B cell (primary cell): ENCODE measurements at regions of chr19 and their contacts with region 1.

Region 1: DNA sequence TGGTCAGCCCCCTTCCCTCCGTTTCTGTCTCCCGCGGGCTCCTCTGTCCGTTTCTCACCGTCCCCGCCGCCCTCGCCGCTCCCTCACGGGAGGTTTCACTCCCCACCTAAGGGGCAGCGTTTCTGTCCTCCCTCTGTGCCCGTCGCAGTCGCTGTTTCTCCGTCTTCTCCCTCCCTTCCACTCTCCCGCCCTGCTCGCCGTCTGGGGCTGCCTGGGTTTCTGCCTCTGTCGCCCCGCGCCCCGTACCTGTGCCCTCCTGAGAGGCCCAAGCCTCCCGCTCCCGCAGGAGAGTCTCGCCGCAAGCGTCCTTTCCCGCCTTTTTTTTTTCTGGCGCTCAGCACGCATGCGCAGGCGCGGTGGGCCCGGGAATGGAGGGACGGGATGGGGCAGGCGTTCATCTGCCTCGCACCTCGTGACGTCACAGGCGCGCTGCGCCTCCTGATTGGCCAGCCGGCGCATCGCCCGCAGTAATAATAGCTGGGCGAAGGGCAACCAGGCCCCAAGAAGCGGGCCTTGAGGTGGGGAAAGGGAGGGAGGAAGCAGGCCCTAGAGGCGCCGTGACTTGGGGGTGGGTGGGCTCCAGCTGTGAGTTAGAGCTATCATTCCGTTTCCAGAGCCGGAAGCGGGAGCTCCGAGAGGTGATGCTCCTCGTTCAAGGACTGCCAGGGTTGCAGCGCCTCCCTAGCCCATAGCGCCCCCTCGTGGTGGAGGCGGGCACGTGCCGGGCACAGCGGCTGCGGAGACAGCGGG is 15.4 kb downstream of the SSC5D start:
- DNase-seq: peak; percentile 98
- ATAC-seq: peak; percentile 96
- H3K4me3 ChIP-seq: peak overlapping the region in 4 of 5 experiments; percentile 67 to 71 (median 69)
- H3K4me3 Mint-ChIP-seq: peak overlapping the region; percentile 93
- H3K27ac ChIP-seq: peak overlapping the region; percentile 91 to 94
- H3K27ac Mint-ChIP-seq: peak overlapping the region; percentile 94
- H3K4me1 ChIP-seq: peaks cover 4 to 16% of the 10 kb centered on the region in 2 donors
- H3K4me1 Mint-ChIP-seq: peaks cover 16% of the 10 kb centered on the region
- H3K27me3 ChIP-seq: no peaks in the 10 kb centered on the region
- H3K27me3 Mint-ChIP-seq: no peaks in the 10 kb centered on the region
- CTCF ChIP-seq: peak; percentile 99

Region 2: DNA sequence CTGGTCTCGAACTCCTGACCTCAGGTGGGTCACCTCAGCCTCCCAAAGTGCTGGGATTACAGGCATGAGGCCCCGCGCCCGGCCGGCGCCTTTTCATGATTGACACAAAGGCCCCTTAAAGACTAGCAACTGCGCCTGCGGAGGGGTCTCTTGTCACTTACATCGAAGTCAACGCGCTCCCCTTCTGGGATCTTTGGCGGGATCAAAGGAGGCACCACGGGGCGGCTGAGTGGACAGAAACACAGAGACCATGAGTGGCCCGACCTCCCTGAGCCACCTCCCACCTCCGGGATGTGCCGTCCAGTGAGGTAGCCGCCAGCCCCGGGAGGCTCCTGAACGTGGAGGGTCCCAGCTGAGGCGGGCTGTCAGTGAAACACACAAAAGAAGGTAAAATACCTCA is 362.0 kb before region 1 on chr19:
- CTCF ChIA-PET with region 1: interaction called, 133 read pairs
- POLR2A ChIA-PET with region 1: interaction called, 5 read pairs
- intact Hi-C with region 1: no loop called
- DNase-seq: no peak
- ATAC-seq: no peak
- H3K4me3 ChIP-seq: peak overlapping the region in 1 of 5 experiments; percentile 24
- H3K4me3 Mint-ChIP-seq: no peak overlapping the region
- H3K27ac ChIP-seq: no peak overlapping the region
- H3K27ac Mint-ChIP-seq: no peak overlapping the region
- H3K4me1 ChIP-seq: peaks cover 19 to 20% of the 10 kb centered on the region in 2 donors
- H3K4me1 Mint-ChIP-seq: peaks cover 7% of the 10 kb centered on the region
- H3K27me3 ChIP-seq: peaks cover 0 to 80% (median 26%) of the 10 kb centered on the region in 4 experiments
- H3K27me3 Mint-ChIP-seq: peaks cover 36% of the 10 kb centered on the region
- CTCF ChIP-seq: no peak

Region 3: DNA sequence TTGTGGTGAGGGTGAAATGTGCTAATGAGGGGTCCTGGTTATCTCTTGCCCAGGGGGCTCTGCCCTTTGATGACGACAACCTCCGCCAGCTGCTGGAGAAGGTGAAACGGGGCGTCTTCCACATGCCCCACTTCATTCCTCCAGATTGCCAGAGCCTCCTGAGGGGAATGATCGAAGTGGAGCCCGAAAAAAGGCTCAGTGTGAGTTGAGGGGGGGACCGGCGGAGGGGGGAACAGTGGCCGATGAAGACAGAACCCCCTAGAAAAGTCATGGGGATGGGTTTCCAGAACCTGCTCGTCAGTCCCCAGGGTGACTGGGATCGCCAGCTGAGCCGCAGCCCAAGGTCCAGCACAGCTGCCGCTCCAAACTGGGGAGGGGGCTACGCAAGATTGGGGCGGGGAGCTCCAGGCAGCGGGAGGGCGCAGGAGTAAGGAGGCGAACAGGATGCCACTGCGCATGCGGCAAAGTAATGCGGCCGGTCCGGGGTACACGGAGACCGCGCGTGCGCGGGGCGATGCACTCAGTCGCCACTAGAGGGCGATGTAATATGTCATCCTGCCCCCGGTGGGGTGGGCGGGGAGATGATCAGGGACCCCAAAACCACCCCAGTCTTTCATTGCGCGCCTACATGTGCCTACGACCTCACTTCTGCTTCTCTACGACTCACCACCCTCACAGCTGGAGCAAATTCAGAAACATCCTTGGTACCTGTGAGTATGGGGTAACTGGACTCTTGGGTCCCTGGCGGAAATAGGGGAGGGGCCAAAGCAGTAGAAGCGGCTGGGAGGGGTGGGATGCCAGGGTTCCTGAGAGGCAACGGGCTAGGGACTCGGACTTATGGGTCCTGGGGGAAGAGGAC is 202.0 kb before region 1 on chr19:
- CTCF ChIA-PET with region 1: interaction called, 17 read pairs
- POLR2A ChIA-PET with region 1: no interaction called
- intact Hi-C with region 1: loop called (anchors 5 kb)
- DNase-seq: peak; percentile 95
- ATAC-seq: peak; percentile 91
- H3K4me3 ChIP-seq: peak overlapping the region in 4 of 5 experiments; percentile 35 to 53 (median 49)
- H3K4me3 Mint-ChIP-seq: peak overlapping the region; percentile 90
- H3K27ac ChIP-seq: peak overlapping the region; percentile 25 to 64
- H3K27ac Mint-ChIP-seq: peak overlapping the region; percentile 87
- H3K4me1 ChIP-seq: peaks cover 8 to 15% of the 10 kb centered on the region in 2 donors
- H3K4me1 Mint-ChIP-seq: peaks cover 12% of the 10 kb centered on the region
- H3K27me3 ChIP-seq: no peaks in the 10 kb centered on the region
- H3K27me3 Mint-ChIP-seq: peaks cover 6% of the 10 kb centered on the region
- CTCF ChIP-seq: peak; percentile 92

Region 4: DNA sequence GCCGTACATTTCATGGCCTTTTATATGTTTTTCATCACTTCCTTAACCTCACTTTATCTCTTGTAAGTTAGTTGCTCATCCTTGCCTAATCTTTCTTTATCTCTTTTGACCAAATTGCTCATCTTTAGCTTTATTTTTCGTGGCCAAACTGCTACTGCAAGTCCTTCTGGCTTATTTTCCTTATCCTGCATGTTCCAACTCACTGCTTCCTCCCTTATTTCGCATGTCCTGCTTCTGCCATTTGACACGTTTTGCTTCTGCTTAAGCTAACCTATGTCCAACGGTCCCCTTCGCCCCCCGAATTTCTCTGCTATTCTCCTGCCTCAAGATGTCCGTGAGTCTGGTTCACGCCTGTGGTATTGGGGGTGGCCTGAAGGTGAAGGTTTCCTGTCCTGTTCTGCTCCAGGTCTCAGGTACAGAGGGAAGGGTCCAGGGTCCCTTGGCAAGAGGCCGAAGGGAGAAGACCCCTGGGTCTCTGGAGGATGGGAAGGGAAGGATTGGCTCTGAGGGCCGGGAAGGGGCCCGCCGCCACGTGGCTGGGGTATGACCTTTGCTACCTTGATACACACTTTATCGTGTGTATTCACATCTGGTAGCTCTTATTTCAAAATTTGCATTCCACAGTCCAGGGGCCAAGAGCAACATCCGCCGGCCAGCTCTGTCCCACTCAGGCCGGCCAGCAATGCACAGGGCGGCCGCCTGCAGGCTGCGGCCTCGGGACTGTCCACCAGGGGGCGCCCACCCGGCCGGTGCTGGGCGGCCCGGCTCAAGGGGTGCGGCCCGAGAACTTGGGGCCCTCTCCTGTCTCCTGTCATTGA is 36.2 kb before region 1 on chr19:
- CTCF ChIA-PET with region 1: interaction called, 70 read pairs
- POLR2A ChIA-PET with region 1: no interaction called
- intact Hi-C with region 1: loop called (anchors 1 kb)
- DNase-seq: peak; percentile 79
- ATAC-seq: peak; percentile 99
- H3K4me3 ChIP-seq: no peak overlapping the region
- H3K4me3 Mint-ChIP-seq: no peak overlapping the region
- H3K27ac ChIP-seq: no peak overlapping the region
- H3K27ac Mint-ChIP-seq: no peak overlapping the region
- H3K4me1 ChIP-seq: peaks cover 4 to 7% of the 10 kb centered on the region in 2 donors
- H3K4me1 Mint-ChIP-seq: peaks cover 6% of the 10 kb centered on the region
- H3K27me3 ChIP-seq: no peaks in the 10 kb centered on the region
- H3K27me3 Mint-ChIP-seq: no peaks in the 10 kb centered on the region
- CTCF ChIP-seq: peak; percentile 99

Region 5: DNA sequence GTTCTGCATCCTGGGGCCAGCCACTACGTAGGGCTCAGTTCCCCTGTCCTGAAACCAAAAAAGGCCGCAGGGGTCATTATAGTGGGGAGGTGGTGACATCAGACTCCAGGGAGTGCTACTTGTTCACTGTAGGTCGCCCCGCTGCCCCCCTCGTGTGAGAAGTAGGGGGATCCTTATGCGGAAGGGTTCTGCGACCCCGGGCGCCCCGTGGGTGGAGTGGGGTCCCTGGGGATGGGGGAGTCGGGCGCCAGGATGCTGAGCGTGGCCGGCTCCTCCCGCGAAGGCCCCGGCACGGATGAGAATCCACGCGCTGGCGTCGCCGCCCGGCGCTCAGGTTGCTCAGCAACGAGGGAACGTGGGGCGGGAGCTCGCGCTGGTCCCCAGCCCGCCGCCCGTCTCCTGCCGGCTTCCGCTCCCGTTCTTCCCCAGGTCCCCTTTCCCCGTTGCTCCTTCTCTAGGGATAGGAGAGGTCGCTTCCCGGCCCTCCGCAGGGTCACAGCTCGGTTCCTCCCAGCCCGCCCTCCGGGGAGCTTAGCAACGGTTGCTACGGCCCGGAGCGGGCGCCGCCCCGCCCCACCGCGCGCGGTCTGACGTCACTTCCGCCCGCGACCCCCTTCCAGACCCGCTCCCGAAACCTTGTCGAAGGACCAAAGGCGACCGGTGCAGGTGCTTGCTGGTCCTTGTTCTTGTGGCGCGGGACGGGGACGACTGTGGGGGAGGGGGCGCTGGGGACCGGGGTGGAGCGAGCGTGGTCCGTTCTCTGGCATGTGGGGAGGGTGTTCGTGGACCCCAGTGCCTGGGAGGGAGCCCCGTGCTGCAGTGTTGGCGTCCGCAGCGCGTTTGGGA is 18.9 kb before region 1 on chr19 and contains the start of gene NAT14:
- CTCF ChIA-PET with region 1: interaction called, 15 read pairs
- POLR2A ChIA-PET with region 1: no interaction called
- intact Hi-C with region 1: no loop called
- DNase-seq: peak; percentile 89
- ATAC-seq: peak; percentile 76
- H3K4me3 ChIP-seq: peak within 1 kb of the TSS; percentile 3 to 71 (median 55)
- H3K4me3 Mint-ChIP-seq: peak within 1 kb of the TSS; percentile 83
- H3K27ac ChIP-seq: peak within 1 kb of the TSS; percentile 20 to 70
- H3K27ac Mint-ChIP-seq: peak within 1 kb of the TSS; percentile 80
- H3K4me1 ChIP-seq: peaks cover 10 to 22% of the 10 kb centered on the region in 2 donors
- H3K4me1 Mint-ChIP-seq: peaks cover 15% of the 10 kb centered on the region
- H3K27me3 ChIP-seq: no peaks in the 10 kb centered on the region
- H3K27me3 Mint-ChIP-seq: no peaks in the 10 kb centered on the region
- CTCF ChIP-seq: no peak
- total RNA-seq, gene NAT14: 10.7 and 12.6 TPM in 2 replicates

Region 6: GRCh38 chr19:55605207-55605636 is 101.5 kb after region 1 on chr19:
- CTCF ChIA-PET with region 1: interaction called, 10 read pairs
- POLR2A ChIA-PET with region 1: no interaction called
- intact Hi-C with region 1: no loop called
- DNase-seq: peak; percentile 97
- ATAC-seq: peak; percentile 76
- H3K4me3 ChIP-seq: peak overlapping the region; percentile 43 to 84 (median 70)
- H3K4me3 Mint-ChIP-seq: peak overlapping the region; percentile 86
- H3K27ac ChIP-seq: peak overlapping the region; percentile 74 to 85
- H3K27ac Mint-ChIP-seq: peak overlapping the region; percentile 94
- H3K4me1 ChIP-seq: peaks cover 17 to 35% of the 10 kb centered on the region in 2 donors
- H3K4me1 Mint-ChIP-seq: peaks cover 56% of the 10 kb centered on the region
- H3K27me3 ChIP-seq: no peaks in the 10 kb centered on the region
- H3K27me3 Mint-ChIP-seq: no peaks in the 10 kb centered on the region
- CTCF ChIP-seq: no peak